ENCODE measurements at regions of chr20 and their contacts with region 1.

Region 1: GRCh38 chr20:34922654-34923424 is 32.8 kb downstream of the GSS start:
- DNase-seq: no peak
- ATAC-seq: no peak
- H3K4me3 ChIP-seq: no peak overlapping the region
- H3K4me3 Mint-ChIP-seq: no peak overlapping the region
- H3K27ac ChIP-seq: no peak overlapping the region
- H3K27ac Mint-ChIP-seq: no peak overlapping the region
- H3K4me1 ChIP-seq: peaks cover 6 to 12% of the 10 kb centered on the region in 2 donors
- H3K4me1 Mint-ChIP-seq: peaks cover 16 to 50% (median 25%) of the 10 kb centered on the region in 7 donors
- H3K27me3 ChIP-seq: no peaks in the 10 kb centered on the region
- H3K27me3 Mint-ChIP-seq: no peaks in the 10 kb centered on the region

Region 2: DNA sequence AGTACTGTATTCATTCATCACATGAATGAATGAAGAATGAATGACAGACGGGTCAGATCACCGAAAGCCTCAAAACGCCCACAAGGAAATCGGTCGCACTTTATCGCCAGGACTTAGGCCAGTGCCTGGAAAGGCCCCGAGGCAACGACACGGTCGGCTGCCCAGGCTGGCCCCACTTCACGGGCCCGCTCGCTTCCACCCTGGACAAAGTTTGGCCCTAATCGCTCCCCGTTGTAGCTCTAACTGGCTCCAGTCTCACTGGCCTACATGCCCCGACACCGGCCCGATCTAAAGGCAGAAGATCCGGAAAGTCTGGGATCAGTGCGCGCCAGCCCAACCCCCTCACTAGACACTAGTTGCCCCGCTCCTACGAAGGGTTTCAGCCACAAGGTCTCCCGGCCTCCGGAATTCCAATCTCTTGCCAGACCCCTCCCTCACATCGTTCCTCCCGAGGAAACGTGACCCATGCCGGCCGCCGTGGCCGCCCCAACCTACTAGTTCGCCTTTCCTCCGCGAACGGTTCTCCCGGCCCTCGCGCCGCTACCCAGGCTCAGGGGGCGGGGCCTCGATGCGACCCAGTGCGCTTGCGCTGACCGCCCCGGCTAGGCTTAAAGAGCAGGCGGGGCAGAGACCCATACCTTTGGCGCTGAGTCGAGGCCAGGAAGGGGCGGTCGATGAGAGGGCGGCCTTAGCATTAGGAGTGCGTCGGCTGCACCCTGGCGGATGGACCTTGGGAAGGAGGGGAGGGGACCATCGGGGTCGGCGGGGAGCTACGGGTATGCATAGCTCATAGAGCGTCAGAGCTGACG is 32.6 kb after region 1 on chr20 and contains the starts of genes GSS and MYH7B:
- CTCF ChIA-PET with region 1: no interaction called
- POLR2A ChIA-PET with region 1: no interaction called
- intact Hi-C with region 1: loop called in 1 of 2 experiments (anchors 2 kb)
- DNase-seq: peak; percentile 90 to 100 (median 94)
- ATAC-seq: peak; percentile 97
- H3K4me3 ChIP-seq: peak within 1 kb of the TSS; percentile 87
- H3K4me3 Mint-ChIP-seq: peak within 1 kb of the TSS; percentile 95 to 100 (median 98)
- H3K27ac ChIP-seq: peak within 1 kb of the TSS; percentile 77
- H3K27ac Mint-ChIP-seq: peak within 1 kb of the TSS; percentile 94 to 98 (median 97)
- H3K4me1 ChIP-seq: peaks cover 5 to 11% of the 10 kb centered on the region in 2 donors
- H3K4me1 Mint-ChIP-seq: peaks cover 11 to 40% (median 34%) of the 10 kb centered on the region in 7 donors
- H3K27me3 ChIP-seq: no peaks in the 10 kb centered on the region
- H3K27me3 Mint-ChIP-seq: no peaks in the 10 kb centered on the region
- total RNA-seq, gene GSS: 25.9 to 54.4 (median 45.8) TPM
- total RNA-seq, gene MYH7B: 0.15 to 1.0 (median 0.44) TPM

Measured in naive thymus-derived CD4-positive, alpha-beta T cell (primary cell).